Endothelial cell of umbilical vein (primary cell): ENCODE measurements at regions of chr6 and their contacts with region 1.

Region 1: DNA sequence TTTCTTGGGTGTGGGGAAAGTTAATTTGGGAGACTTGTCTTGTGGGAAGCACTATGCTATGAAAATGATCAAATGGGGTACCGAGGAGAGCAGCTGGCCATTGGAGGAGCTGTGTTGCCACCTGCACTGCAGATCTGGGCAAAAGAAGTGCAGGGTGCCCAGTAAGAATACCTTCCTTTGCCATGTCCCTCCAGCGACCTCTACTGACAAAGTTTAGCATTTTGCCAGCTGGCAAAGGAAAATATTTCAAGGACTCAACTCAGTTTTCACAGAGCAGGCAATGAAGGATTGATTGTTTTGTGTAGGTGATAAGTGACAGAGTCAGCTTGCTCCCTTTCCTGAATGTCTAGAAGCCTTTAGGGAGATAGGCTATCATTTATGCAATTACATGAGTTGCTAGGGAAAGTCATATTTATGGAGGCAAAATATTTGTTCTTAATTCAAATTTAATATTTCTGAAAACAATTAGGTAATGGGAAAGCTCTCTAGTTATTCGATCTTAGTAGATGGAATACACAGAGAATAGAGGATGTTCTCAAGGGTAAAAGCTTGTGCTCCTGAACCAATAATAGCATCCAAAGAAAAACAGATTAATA is 118.4 kb downstream of the FARS2 start:
- DNase-seq: peak; percentile 71
- H3K4me3 ChIP-seq: no peak overlapping the region
- H3K27ac ChIP-seq: no peak overlapping the region
- H3K4me1 ChIP-seq: no peaks in the 10 kb centered on the region
- H3K27me3 ChIP-seq: no peaks in the 10 kb centered on the region
- CTCF ChIP-seq: peak; percentile 68 to 77
- POLR2A ChIP-seq: no peak

Region 2: DNA sequence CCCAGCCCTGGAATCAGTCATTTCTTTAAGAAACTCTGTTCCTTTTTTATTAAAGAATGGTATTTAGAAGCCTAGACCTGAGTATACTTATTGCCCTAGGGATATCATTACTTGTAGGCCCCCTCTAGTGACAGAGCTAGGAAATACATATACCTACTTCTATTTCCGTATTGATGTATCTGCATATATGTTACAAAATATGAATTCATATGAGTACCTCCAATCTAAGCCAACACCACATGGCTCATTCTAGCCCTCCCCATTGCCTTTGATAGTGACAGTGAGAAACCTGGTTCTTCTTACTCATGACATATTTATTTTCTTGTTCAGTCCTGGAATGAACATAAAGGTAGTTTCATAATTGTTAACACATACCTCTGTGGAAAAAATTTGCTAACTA is 18.8 kb after region 1 on chr6:
- CTCF ChIA-PET with region 1: interaction called, 11 read pairs
- POLR2A ChIA-PET with region 1: no interaction called
- dilution Hi-C with region 1: no loop called
- intact Hi-C with region 1: no loop called
- DNase-seq: peak; percentile 62
- H3K4me3 ChIP-seq: no peak overlapping the region
- H3K27ac ChIP-seq: no peak overlapping the region
- H3K4me1 ChIP-seq: peaks cover 2% of the 10 kb centered on the region
- H3K27me3 ChIP-seq: no peaks in the 10 kb centered on the region
- CTCF ChIP-seq: peak; percentile 26 to 27
- POLR2A ChIP-seq: no peak